Caco-2 (cell line): ENCODE measurements at regions of chr5 and their contacts with region 1.

Region 1: GRCh38 chr5:150498501-150498900 is 9.4 kb upstream of the NDST1 start:
- DNase-seq: no peak
- H3K4me3 ChIP-seq: no peak overlapping the region
- H3K4me3 Mint-ChIP-seq: no peak overlapping the region
- H3K27ac Mint-ChIP-seq: peak overlapping the region; percentile 1
- H3K4me1 ChIP-seq: peaks cover 41% of the 10 kb centered on the region
- H3K4me1 Mint-ChIP-seq: peaks cover 42% of the 10 kb centered on the region
- H3K27me3 ChIP-seq: no peaks in the 10 kb centered on the region
- H3K27me3 Mint-ChIP-seq: no peaks in the 10 kb centered on the region
- CTCF ChIP-seq: no peak

Region 2: GRCh38 chr5:150511578-150512367 is 13.3 kb after region 1 on chr5:
- CTCF ChIA-PET with region 1: no interaction called
- POLR2A ChIA-PET with region 1: no interaction called
- intact Hi-C with region 1: loop called (anchors 2 kb)
- DNase-seq: peak; percentile 61 to 78
- H3K4me3 ChIP-seq: no peak overlapping the region
- H3K4me3 Mint-ChIP-seq: peak overlapping the region; percentile 75
- H3K27ac Mint-ChIP-seq: peak overlapping the region; percentile 96
- H3K4me1 ChIP-seq: peaks cover 71% of the 10 kb centered on the region
- H3K4me1 Mint-ChIP-seq: peaks cover 57% of the 10 kb centered on the region
- H3K27me3 ChIP-seq: no peaks in the 10 kb centered on the region
- H3K27me3 Mint-ChIP-seq: no peaks in the 10 kb centered on the region
- CTCF ChIP-seq: no peak

Region 3: GRCh38 chr5:150829744-150830143 is 331.2 kb after region 1 on chr5:
- CTCF ChIA-PET with region 1: no interaction called
- POLR2A ChIA-PET with region 1: no interaction called
- intact Hi-C with region 1: no loop called
- DNase-seq: no peak
- H3K4me3 ChIP-seq: no peak overlapping the region
- H3K4me3 Mint-ChIP-seq: no peak overlapping the region
- H3K27ac Mint-ChIP-seq: no peak overlapping the region
- H3K4me1 ChIP-seq: no peaks in the 10 kb centered on the region
- H3K4me1 Mint-ChIP-seq: no peaks in the 10 kb centered on the region
- H3K27me3 ChIP-seq: no peaks in the 10 kb centered on the region
- H3K27me3 Mint-ChIP-seq: no peaks in the 10 kb centered on the region
- CTCF ChIP-seq: no peak